Activated CD4-positive, alpha-beta memory T cell treated with anti-CD3 and anti-CD28 coated beads for 36 hours (primary cell): ENCODE measurements at regions of chr3 and their contacts with region 1.

Region 1: GRCh38 chr3:50568947-50569749 is at the start of gene HEMK1:
- DNase-seq: peak; percentile 98
- H3K4me3 Mint-ChIP-seq: peak within 1 kb of the TSS; percentile 99
- H3K27ac Mint-ChIP-seq: peak within 1 kb of the TSS; percentile 95
- H3K4me1 Mint-ChIP-seq: peaks cover 56% of the 10 kb centered on the region
- H3K27me3 Mint-ChIP-seq: no peaks in the 10 kb centered on the region
- total RNA-seq, gene HEMK1: 78.7 to 82.6 TPM

Region 2: DNA sequence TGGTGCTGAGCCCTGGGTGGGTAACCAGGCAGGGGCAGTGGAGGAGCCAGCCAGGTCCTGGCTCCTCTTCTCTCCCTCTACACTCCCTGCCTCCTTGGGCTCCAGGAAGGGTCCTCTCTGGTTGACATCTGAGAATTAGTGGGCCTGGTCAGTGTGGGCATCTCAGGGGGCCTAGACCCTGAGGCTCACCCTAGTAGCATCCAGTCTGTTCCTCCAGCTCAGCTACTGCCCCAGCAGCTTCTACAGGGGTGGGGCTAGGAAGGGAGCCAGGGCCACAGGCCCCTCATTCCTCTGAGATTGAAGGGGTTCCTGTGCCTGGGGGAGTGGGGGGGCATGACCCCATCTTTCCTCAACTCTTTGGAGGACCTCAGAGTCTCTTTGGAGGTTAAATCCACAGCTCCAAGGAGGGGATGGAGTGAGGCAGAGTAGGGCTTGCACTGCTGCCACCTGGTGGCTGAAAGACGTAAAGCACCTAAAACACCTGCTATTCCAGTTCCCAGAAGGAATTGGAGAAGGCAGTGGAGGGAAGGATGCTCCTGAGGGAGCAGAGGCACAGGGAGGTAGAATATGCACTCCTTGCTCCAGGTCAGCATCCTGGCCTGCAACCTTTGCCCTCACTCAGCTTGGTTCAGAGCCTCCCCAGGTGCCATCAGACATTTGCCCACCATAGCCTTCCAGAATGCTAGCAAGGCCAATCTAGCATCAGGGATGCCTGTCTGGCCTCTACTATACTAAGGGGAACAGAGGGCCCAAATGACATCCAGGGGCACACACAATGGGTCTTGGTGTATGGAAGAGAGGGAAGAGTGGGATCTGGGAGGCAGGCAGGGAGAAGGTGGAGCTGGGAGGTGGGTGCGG is 26.7 kb before region 1 on chr3:
- CTCF ChIA-PET with region 1: interaction called, 14 read pairs
- POLR2A ChIA-PET with region 1: no interaction called
- intact Hi-C with region 1: no loop called
- DNase-seq: peak; percentile 72
- H3K4me3 Mint-ChIP-seq: no peak overlapping the region
- H3K27ac Mint-ChIP-seq: no peak overlapping the region
- H3K4me1 Mint-ChIP-seq: no peaks in the 10 kb centered on the region
- H3K27me3 Mint-ChIP-seq: no peaks in the 10 kb centered on the region

Region 3: DNA sequence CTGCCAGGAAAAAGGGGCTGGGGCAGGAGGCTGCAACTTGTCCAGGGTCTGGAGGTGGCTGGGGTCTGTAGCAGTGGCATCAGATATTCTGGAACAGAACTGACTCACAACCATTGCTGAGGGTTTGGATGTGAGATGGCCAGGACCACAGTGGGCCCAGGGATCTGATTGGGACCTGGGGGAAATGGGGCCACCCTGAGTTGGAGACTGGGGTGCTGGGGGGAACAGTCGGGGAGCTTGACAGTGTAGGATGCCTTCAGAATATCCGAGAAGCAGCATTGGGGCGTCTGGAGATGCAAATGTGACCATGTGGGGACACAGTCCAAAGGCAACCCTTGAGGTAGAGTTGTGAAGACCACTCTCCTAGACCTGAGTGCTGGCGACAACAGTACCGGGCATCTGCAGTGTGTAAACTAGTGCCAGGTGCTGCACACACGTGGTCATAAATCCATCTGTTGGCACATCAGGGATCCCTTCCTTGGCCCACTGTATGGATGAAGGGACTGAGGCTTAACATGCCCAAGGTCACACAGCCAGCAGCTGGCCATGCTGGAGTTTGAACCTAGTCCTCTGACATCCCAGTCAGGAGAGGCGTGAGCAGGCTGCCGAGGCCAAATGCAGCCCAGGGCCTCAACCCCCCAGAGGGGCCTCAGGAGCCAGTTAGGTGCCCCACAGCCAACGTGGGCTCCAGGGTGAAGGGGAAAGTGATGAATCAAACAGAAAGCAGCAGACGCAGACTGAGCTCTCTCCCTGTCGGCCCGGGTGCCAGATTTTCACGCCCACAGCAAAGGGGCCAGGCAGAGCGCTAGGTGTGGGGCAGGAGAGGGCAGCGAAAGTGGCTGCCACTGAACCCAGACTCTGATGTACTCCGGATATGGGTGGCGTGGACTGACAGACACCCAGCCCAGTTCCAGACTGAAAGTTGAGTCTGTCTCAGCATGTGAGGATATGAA is 18.9 kb after region 1 on chr3:
- CTCF ChIA-PET with region 1: interaction called, 317 read pairs
- POLR2A ChIA-PET with region 1: interaction called, 510 read pairs
- intact Hi-C with region 1: loop called (anchors 1 kb)
- DNase-seq: peak; percentile 96
- H3K4me3 Mint-ChIP-seq: peak overlapping the region; percentile 68
- H3K27ac Mint-ChIP-seq: peak overlapping the region; percentile 98
- H3K4me1 Mint-ChIP-seq: peaks cover 94% of the 10 kb centered on the region
- H3K27me3 Mint-ChIP-seq: no peaks in the 10 kb centered on the region

Region 4: DNA sequence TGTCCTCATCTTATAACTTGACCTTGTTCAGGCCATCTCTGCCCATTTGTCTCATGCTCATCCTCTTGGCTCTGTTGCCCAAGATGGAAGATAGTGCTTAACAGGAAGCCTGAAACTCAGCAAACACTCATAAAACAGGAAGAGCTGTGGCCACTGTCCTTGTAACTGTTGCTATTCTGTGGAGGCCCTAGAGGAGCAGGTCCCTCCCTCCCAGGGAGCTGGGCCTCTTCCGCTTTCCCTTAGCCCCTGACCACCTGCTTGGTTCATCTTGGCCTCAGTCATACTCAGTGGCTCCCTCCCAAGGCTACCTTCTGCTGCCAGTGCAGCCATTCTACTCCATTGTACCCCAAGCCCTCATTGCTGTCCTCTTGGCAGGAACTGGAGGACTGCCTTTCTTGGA is 51.3 kb after region 1 on chr3:
- CTCF ChIA-PET with region 1: interaction called, 908 read pairs
- POLR2A ChIA-PET with region 1: interaction called, 1,013 read pairs
- intact Hi-C with region 1: no loop called
- DNase-seq: peak; percentile 53
- H3K4me3 Mint-ChIP-seq: peak overlapping the region; percentile 93
- H3K27ac Mint-ChIP-seq: peak overlapping the region; percentile 91
- H3K4me1 Mint-ChIP-seq: peaks cover 76% of the 10 kb centered on the region
- H3K27me3 Mint-ChIP-seq: no peaks in the 10 kb centered on the region

Region 5: GRCh38 chr3:50657816-50658215 is 88.7 kb after region 1 on chr3:
- CTCF ChIA-PET with region 1: interaction called, 46 read pairs
- POLR2A ChIA-PET with region 1: interaction called, 5 read pairs
- intact Hi-C with region 1: no loop called
- DNase-seq: peak; percentile 4
- H3K4me3 Mint-ChIP-seq: no peak overlapping the region
- H3K27ac Mint-ChIP-seq: no peak overlapping the region
- H3K4me1 Mint-ChIP-seq: peaks cover 23% of the 10 kb centered on the region
- H3K27me3 Mint-ChIP-seq: no peaks in the 10 kb centered on the region

Region 6: DNA sequence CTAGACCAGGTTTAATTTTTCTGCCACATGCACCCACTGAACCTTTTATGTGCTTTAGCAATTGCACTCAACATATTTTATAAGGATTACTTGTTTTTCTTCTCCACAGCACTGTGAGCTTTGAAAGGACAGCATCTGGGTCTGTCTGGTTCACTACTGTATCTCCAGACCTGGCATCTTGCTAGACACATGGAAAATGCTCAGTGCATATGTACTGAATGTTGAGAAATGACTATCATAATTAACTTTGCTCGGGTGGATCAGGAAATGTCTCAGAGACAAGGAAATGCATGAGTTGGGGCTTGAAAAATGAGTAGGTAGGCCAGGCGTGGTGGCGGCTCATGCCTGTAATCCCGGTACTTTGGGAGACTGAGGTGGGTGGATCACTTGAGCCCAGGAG is 145.8 kb after region 1 on chr3:
- CTCF ChIA-PET with region 1: no interaction called
- POLR2A ChIA-PET with region 1: no interaction called
- intact Hi-C with region 1: no loop called
- DNase-seq: no peak
- H3K4me3 Mint-ChIP-seq: no peak overlapping the region
- H3K27ac Mint-ChIP-seq: no peak overlapping the region
- H3K4me1 Mint-ChIP-seq: no peaks in the 10 kb centered on the region
- H3K27me3 Mint-ChIP-seq: no peaks in the 10 kb centered on the region

Region 7: DNA sequence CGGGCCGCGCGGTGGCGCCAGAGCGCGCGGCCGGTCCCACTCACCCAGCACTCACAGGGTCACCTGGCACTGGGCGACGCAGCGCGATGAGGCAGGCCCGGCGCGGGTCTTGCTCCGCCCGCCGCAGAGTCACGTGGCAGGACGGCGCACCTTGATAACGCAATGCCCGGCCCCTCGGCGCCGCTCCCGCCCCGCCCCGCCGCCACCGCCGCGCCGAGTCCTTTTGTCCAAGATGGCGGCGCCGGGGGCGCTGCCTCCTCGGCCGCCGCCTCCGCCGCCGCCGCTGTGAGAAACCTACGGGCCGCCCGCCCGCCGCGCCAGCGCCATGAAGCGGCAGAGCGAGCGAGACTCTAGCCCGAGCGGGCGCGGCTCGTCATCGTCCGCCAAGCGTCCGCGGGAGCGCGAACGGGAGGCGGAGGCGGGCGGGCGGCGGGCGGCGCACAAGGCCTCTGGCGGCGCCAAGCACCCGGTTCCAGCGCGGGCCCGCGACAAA is 822.0 kb after region 1 on chr3 and contains the start of gene RBM15B:
- CTCF ChIA-PET with region 1: interaction called, 12 read pairs
- POLR2A ChIA-PET with region 1: no interaction called
- intact Hi-C with region 1: no loop called
- DNase-seq: peak; percentile 98
- H3K4me3 Mint-ChIP-seq: peak within 1 kb of the TSS; percentile 86
- H3K27ac Mint-ChIP-seq: peak within 1 kb of the TSS; percentile 87
- H3K4me1 Mint-ChIP-seq: peaks cover 81% of the 10 kb centered on the region
- H3K27me3 Mint-ChIP-seq: no peaks in the 10 kb centered on the region
- total RNA-seq, gene RBM15B: 19.0 to 19.4 TPM